Right cardiac atrium (tissue), 5 donors: ENCODE measurements at regions of chrX and their contacts with region 1.

Region 1: GRCh38 chrX:152817078-152817764 is 13.3 kb downstream of the CETN2 start:
- DNase-seq: no peak
- ATAC-seq: no peak
- H3K4me3 ChIP-seq: no peak overlapping the region
- H3K27ac ChIP-seq: no peak overlapping the region
- H3K4me1 ChIP-seq: no peaks in the 10 kb centered on the region
- H3K27me3 ChIP-seq: no peaks in the 10 kb centered on the region

Region 2: DNA sequence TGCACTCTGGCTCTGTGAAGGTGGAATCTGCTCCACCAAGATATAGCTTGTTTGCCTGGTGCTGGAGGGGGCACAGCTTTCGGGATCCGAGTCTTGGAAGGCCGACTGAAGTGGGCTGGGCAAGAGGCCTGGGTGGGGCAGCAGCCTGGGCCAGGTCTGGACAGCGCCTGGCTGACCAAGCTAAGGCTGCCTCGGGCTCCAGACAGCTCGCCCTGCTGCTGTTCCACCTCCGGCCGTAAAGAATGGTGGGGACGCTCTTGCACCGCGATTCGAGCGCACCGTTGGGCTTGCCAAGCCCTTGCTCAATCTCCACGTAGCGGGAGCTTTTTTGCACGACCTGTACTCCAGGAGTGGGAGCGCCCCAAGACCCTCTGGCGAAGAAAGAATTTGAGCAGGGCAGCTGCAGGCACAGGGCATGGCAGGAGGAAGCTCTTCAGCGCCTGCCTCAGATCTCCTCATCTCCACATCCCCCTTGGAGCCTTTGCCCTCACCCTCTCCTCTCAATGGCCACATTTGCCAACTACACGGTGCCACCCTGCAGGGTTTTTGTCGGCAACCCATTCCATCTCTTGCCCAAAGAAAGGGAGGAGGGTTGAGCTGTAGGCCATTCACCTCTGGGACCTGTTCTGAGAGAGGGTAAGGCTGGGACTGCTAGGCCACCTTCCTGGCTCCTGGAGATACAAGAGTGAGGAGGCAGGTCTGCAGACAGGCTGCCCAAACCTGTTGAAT is 1063.7 kb before region 1 on chrX:
- intact Hi-C with region 1: loop called in 1 of 4 experiments (anchors 10 kb)
- DNase-seq: peak; percentile 49 to 79 (median 78)
- ATAC-seq: peak; percentile 88 to 90
- H3K4me3 ChIP-seq: no peak overlapping the region
- H3K27ac ChIP-seq: no peak overlapping the region
- H3K4me1 ChIP-seq: no peaks in the 10 kb centered on the region
- H3K27me3 ChIP-seq: no peaks in the 10 kb centered on the region